AG04450 (cell line): ENCODE measurements at regions of chr10 and their contacts with region 1.

Region 1: DNA sequence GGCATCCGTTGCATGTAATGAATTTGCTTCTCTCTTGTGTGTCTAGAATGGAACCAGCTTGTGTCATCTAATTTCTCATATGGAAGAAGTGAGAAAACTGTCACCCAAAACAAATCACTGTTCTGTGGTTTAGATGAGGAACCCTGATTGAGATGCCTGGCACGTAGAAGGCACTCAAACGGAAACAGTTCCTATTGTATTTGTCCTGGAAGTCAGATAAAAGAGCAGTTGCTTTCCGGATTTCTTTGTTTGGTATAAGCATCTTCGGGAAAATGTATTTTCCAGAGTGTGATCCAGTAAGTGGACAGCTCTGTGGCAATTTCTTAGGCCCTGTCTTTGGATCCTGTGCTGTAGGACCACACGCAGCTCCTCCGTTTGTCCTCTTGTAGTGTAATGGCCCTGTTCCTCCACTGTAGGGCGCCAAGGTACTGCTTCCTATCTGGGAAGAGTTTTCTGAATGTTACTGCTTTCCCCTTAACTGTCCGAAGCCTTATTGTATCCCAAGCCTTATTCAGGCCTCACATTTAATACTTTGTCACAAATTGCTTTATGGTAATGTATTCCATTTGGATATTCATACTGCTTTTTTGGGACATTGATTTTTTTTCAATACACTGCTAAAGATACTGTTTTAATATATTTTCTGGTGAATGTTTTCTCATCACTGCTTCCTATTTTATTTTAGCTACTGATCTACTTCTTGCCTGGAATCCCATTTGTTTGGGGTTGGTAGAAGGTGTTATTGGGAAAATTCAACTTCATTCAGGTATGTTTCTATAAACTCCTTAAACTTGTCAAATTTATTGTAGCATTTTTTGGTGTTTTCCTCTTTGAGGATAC is 24.8 kb downstream of the INPP5F start:
- DNase-seq: peak; percentile 65
- H3K4me3 ChIP-seq: no peak overlapping the region
- H3K27ac ChIP-seq: no peak overlapping the region
- H3K27me3 ChIP-seq: no peaks in the 10 kb centered on the region
- CTCF ChIP-seq: peak; percentile 99

Region 2: DNA sequence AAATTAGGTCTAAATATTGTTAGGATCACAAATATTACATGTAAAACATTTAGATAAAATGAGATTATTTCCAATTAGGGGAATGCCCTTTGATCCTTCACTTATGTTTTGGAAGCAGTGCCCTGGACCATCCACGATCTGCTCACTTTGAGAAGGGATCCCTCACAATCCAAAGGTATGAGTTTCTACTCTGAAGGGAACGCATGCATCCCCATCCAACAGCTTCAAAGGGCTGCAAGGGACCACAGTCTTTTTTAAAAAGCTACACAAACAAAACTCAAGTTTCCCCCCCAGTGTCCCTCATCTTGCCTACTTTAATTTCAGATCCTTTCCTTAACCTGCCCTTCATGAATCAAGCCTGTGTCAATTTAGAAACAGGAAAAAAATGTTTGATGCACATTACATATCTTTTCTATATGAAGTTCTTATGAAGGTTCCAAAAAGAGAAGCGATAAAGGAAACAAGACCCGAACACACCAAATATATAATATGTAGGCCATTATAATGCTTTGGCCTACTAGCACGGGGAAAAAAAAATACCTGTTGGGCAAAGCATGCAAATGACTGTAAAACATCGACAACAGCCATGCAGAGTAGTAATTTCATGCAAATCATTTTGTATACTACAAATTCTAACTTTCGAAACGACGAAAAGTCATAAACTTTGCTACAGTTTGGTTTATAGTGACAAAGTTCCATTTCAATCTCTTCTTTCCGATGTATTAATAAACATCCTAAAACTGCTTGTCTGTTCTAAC is 672.0 kb before region 1 on chr10:
- CTCF ChIA-PET with region 1: no interaction called
- POLR2A ChIA-PET with region 1: no interaction called
- DNase-seq: no peak
- H3K4me3 ChIP-seq: peak overlapping the region; percentile 93
- H3K27ac ChIP-seq: no peak overlapping the region
- H3K27me3 ChIP-seq: no peaks in the 10 kb centered on the region
- CTCF ChIP-seq: no peak

Region 3: DNA sequence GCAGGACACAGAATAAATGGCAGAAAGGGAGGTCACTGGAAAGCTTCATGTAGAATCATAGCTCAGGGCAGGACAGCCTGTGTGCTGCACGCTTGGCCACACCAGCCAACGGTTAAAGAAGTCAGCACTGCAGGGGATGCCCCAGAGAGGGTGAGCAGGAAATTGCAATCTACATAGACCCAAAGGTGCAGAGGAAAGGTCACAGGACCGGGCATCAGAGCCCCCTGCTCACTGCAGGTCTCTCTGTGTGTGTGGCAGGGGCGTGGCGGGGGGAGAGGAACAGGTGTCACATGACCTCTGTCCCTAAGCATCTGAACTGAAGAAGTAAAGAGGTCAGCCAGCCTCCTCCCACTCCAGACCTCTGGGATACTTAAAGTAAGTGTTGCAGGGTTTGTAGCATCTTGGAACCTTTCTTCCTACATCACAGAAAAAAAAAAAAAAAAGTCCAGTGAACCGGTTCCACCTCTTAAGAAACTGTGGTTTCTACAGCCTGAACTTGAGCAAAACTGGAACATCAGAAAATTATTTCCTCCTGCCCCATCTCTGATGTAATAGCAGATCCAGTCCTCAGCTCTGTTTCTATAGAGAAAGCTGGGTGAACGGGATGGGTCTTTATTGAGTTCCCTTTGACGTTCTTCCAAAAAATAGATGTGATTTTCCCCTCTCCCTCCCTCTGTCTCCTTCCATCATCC is 272.4 kb before region 1 on chr10:
- CTCF ChIA-PET with region 1: no interaction called
- POLR2A ChIA-PET with region 1: no interaction called
- DNase-seq: no peak
- H3K4me3 ChIP-seq: no peak overlapping the region
- H3K27ac ChIP-seq: no peak overlapping the region
- H3K27me3 ChIP-seq: peaks cover 43% of the 10 kb centered on the region
- CTCF ChIP-seq: no peak

Region 4: DNA sequence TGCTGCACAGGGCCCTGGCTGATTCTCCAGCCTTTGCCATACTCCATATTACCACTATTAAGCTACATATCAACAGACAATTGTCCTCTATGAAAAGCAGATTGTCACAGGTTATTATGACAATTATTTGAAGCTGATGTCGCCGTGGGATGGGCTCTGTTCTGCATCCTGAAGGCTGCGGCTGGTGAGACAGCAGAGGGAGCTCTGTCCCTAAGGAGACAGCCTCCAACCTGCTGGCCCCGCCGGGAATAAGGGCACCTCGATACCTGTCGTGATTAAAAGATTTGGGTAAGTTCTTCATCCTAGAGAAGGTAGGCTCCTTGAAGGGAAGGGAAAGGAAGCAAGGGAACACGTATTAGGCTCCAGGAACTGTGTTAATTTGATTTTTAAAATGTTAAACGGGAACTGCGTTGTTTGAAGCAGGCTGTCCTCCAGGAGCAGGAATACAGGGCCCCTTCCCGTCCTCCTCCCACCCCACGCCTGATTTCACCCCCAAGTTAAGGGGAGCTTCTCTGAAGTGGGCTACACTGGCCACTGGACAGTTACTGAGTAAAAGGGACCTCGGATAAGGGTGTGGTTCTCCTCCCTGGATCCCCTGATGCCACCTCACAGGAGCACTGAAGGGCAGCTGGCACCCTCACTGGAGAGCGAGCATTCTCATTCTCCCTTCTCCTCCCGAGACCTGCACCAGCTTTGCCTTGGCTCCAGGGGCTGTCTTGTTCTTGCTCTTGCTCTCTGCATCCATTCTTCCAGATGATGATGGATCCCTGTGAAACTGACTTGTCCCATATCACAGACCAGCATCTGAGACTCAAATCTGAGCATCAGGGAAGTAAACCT is 142.1 kb before region 1 on chr10:
- CTCF ChIA-PET with region 1: interaction called, 12 read pairs
- POLR2A ChIA-PET with region 1: no interaction called
- DNase-seq: no peak
- H3K4me3 ChIP-seq: no peak overlapping the region
- H3K27ac ChIP-seq: no peak overlapping the region
- H3K27me3 ChIP-seq: no peaks in the 10 kb centered on the region
- CTCF ChIP-seq: peak; percentile 65

Region 5: GRCh38 chr10:119737827-119738226 is 12.8 kb before region 1 on chr10:
- CTCF ChIA-PET with region 1: interaction called, 46 read pairs
- POLR2A ChIA-PET with region 1: no interaction called
- DNase-seq: peak; percentile 61
- H3K4me3 ChIP-seq: no peak overlapping the region
- H3K27ac ChIP-seq: no peak overlapping the region
- H3K27me3 ChIP-seq: no peaks in the 10 kb centered on the region
- CTCF ChIP-seq: no peak

Region 6: DNA sequence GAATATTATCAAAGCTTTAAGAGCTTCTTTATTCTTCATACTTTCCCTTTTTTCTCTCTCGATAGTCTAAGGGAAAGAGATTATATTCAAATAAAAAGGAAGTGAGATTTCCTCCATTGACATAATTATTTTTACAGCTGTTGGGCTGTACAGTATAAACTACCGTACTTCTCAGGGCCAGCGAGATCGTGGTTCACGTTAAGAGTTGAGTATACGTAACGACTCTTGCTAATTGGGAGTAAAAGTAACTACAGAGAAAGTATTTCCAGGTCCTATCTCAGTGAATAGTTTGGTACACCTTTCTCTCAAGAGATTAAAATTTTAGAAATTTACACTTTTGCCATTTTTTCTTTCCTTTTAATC is 33.0 kb after region 1 on chr10:
- CTCF ChIA-PET with region 1: interaction called, 13 read pairs
- POLR2A ChIA-PET with region 1: no interaction called
- DNase-seq: no peak
- H3K4me3 ChIP-seq: no peak overlapping the region
- H3K27ac ChIP-seq: no peak overlapping the region
- H3K27me3 ChIP-seq: no peaks in the 10 kb centered on the region
- CTCF ChIP-seq: no peak

Region 7: DNA sequence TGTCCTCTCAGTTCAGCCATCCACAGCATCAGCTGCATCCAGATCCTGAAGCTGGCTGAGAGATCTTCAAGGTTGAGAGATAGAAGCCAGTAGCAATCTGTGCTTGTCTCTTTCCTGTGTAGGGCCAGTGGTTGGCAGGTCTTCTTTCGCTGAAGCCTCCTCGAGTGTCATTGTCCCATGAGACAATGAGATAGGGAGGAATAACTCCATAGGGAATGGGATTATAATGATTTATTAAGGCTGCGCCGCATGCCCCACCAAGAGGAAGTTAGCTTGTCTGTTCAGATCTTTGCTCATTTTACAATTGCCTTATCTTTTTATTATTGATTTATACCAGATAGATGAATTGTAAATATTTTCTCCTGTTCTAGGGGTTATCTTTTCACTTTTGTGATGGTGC is 60.5 kb after region 1 on chr10:
- CTCF ChIA-PET with region 1: interaction called, 11 read pairs
- POLR2A ChIA-PET with region 1: no interaction called
- DNase-seq: no peak
- H3K4me3 ChIP-seq: no peak overlapping the region
- H3K27ac ChIP-seq: no peak overlapping the region
- H3K27me3 ChIP-seq: no peaks in the 10 kb centered on the region
- CTCF ChIP-seq: no peak

Region 8: DNA sequence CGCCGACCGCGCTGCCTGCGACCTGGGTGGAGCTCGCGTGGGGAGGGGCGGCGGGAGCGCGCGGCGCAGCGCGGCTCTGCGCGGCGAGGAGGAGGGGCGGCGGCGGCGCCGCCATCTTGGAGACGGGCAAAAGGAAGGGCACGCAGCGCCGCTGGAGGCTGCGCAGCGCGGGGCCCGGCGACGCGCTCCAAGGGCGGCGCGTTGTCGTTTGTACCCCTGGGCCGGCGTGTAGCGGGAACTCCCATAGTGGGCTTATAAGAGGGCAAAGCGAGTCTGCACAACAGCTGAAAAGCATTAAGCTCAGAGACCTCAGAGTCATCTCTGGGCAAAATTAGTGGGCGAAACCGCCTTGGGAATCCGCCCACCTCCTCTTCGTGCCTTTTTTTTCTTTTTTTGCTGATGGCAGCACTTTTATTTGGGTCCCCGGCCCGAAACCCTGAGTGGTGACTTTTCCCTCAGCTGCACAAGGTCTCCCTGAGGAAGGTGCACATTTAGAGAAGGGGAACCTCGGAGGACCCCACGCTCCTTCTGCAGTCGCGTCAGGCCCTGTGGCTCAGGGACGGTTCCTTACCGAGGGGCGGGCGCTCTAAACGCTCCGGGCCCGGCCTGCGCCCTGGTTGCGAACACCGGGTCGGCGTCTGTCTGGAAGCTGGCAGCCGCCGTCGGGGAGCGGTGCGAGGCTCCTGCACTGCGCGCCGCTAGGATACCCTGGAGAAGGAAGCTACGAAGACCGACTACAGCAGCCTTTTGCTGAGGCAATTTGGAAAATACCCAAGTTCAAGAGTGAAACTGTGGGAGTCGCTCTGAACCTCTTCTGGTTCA is 122.5 kb after region 1 on chr10:
- CTCF ChIA-PET with region 1: interaction called, 23 read pairs
- POLR2A ChIA-PET with region 1: no interaction called
- DNase-seq: peak; percentile 29
- H3K4me3 ChIP-seq: peak overlapping the region; percentile 74
- H3K27ac ChIP-seq: peak overlapping the region; percentile 66
- H3K27me3 ChIP-seq: no peaks in the 10 kb centered on the region
- CTCF ChIP-seq: no peak